Endothelial cell of umbilical vein (primary cell): ENCODE measurements at regions of chr17 and their contacts with region 1.

Region 1: GRCh38 chr17:46044286-46044928 is 45.4 kb downstream of the STH start:
- DNase-seq: peak; percentile 93
- H3K4me3 ChIP-seq: no peak overlapping the region
- H3K27ac ChIP-seq: no peak overlapping the region
- H3K4me1 ChIP-seq: peaks cover 9% of the 10 kb centered on the region
- H3K27me3 ChIP-seq: no peaks in the 10 kb centered on the region
- CTCF ChIP-seq: peak; percentile 79 to 83
- POLR2A ChIP-seq: no peak

Region 2: DNA sequence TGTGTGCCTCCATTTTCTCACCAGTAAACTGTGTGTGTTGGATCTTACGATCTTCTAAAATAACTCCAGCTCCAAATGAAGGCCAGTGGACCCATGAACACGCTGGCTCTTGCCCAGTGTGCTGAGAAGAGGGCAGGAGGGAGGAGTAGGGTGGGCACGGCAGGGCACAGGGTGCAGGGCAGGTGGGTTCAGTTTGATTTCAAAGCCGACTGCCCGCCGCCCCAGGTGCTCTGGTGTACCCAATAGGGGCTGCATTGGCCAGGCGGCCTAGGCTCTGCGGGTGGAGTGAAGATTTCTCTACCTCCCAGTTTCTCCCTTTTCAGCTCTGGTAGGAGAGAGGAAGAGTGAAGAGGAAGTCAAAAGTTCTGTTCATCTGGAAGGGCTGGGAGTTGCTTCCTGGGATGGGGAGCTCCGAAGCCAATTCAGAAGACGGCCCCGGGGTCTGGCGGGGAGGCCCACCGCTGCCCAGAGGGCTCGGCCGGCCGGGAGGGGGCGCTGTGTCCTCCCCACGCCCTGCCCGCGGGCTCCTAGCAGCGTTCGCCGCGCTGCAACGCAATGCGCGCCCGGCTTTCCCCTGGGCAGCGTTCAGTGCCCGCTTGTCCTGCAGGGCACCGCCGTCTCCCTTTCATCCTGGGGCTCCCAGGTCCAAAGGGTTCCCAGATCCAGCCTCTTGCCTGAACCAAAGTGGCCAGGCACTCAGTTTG is 261.4 kb before region 1 on chr17:
- CTCF ChIA-PET with region 1: no interaction called
- POLR2A ChIA-PET with region 1: no interaction called
- dilution Hi-C with region 1: no loop called
- intact Hi-C with region 1: no loop called
- DNase-seq: peak; percentile 11
- H3K4me3 ChIP-seq: no peak overlapping the region
- H3K27ac ChIP-seq: no peak overlapping the region
- H3K4me1 ChIP-seq: peaks cover 8% of the 10 kb centered on the region
- H3K27me3 ChIP-seq: peaks cover 57 to 63% of the 10 kb centered on the region in 2 experiments
- CTCF ChIP-seq: peak; percentile 48 to 76
- POLR2A ChIP-seq: no peak

Region 3: DNA sequence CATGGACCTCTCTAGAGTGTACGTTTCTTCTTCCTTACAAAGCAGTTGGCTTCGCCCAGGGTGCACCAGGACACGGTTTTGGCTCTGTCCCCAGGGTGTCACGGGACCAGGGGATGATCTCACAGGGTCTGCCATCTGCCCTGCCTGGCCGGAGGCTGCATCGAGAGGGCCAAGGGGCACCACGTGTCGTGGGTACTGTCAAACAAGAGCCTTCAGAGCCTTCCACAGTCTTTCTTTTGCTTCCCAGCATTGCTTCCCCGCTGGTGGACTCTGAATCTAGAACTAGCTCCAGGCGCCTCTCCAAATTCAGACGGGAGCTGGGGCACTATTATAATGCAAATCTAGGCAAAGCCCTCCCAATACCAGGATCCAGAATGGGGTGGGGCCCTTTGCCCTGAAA is 102.1 kb before region 1 on chr17:
- CTCF ChIA-PET with region 1: no interaction called
- POLR2A ChIA-PET with region 1: no interaction called
- dilution Hi-C with region 1: no loop called
- intact Hi-C with region 1: no loop called
- DNase-seq: no peak
- H3K4me3 ChIP-seq: no peak overlapping the region
- H3K27ac ChIP-seq: no peak overlapping the region
- H3K4me1 ChIP-seq: no peaks in the 10 kb centered on the region
- H3K27me3 ChIP-seq: peaks cover 8 to 13% of the 10 kb centered on the region in 2 experiments
- CTCF ChIP-seq: no peak
- POLR2A ChIP-seq: no peak

Region 4: DNA sequence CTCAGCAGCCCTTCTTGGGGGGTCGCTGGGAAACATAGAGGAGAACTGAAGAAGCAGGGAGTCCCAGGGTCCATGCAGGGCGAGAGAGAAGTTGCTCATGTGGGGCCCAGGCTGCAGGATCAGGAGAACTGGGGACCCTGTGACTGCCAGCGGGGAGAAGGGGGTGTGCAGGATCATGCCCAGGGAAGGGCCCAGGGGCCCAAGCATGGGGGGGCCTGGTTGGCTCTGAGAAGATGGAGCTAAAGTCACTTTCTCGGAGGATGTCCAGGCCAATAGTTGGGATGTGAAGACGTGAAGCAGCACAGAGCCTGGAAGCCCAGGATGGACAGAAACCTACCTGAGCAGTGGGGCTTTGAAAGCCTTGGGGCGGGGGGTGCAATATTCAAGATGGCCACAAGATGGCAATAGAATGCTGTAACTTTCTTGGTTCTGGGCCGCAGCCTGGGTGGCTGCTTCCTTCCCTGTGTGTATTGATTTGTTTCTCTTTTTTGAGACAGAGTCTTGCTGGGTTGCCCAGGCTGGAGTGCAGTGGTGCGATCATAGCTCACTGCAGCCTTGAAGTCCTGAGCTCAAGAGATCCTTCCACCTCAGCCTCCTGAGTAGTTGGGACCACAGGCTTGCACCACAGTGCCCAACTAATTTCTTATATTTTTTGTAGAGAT is 42.0 kb before region 1 on chr17:
- CTCF ChIA-PET with region 1: interaction called, 11 read pairs
- POLR2A ChIA-PET with region 1: no interaction called
- dilution Hi-C with region 1: no loop called
- intact Hi-C with region 1: loop called (anchors 1 kb)
- DNase-seq: peak; percentile 60
- H3K4me3 ChIP-seq: no peak overlapping the region
- H3K27ac ChIP-seq: no peak overlapping the region
- H3K4me1 ChIP-seq: no peaks in the 10 kb centered on the region
- H3K27me3 ChIP-seq: no peaks in the 10 kb centered on the region
- CTCF ChIP-seq: peak; percentile 79 to 81
- POLR2A ChIP-seq: no peak

Region 5: DNA sequence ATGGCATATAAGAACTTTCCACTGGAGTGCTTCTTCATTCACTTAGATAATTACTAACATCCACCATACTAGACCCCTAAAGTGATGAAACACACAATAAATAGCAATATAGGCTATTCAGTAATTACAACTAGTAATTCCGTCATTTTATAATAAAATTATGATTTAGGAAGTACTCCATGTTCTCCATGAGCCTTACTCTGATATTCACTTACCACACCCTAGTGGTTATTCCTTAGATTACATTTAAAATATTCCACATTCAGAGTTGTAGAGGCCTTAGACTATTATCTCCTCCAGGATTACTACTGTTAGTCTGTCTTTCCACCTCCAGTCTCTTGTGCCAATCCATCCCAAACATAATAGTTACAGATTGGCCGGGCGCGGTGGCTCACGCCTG is 17.0 kb after region 1 on chr17:
- CTCF ChIA-PET with region 1: interaction called, 98 read pairs
- POLR2A ChIA-PET with region 1: no interaction called
- dilution Hi-C with region 1: no loop called
- intact Hi-C with region 1: loop called (anchors 2 kb)
- DNase-seq: peak; percentile 49
- H3K4me3 ChIP-seq: no peak overlapping the region
- H3K27ac ChIP-seq: no peak overlapping the region
- H3K4me1 ChIP-seq: peaks cover 19% of the 10 kb centered on the region
- H3K27me3 ChIP-seq: no peaks in the 10 kb centered on the region
- CTCF ChIP-seq: no peak
- POLR2A ChIP-seq: no peak

Region 6: DNA sequence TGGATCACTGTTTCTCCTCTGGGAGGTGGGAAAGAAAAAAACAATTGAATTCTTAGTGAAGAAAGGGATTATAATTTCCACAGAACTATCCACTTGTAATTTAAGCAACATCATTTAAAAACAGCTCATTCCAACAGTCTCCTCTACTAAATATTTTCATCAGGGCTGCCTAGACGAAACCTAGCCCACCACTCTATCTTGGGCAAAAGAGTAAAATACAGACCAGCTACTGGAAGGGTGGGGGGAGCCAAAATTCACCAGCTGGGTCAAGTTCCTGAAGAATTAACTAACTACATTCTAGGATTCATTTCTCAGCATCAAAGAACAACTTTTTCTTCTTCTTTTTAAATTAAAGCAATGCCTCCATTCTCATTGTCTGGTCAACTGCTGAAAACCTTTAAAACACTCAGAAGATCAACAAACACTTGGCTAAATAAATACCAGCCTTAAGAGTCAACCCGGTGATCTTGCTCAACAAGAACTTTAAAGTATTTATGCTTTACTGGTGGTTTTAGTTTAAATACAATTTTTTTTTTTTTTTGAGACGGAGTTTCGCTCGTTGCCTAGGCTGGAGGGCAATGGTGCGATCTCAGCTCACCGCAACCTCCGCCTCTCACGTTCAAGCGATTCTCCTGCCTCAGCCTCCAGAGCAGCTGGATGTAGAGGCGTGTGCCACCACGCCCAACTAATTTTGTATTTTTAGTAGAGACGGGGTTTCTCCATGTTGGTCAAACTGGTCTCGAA is 123.6 kb after region 1 on chr17:
- CTCF ChIA-PET with region 1: interaction called, 11 read pairs
- POLR2A ChIA-PET with region 1: no interaction called
- dilution Hi-C with region 1: no loop called
- intact Hi-C with region 1: no loop called
- DNase-seq: no peak
- H3K4me3 ChIP-seq: no peak overlapping the region
- H3K27ac ChIP-seq: no peak overlapping the region
- H3K4me1 ChIP-seq: peaks cover 17% of the 10 kb centered on the region
- H3K27me3 ChIP-seq: no peaks in the 10 kb centered on the region
- CTCF ChIP-seq: no peak
- POLR2A ChIP-seq: no peak

Region 7: DNA sequence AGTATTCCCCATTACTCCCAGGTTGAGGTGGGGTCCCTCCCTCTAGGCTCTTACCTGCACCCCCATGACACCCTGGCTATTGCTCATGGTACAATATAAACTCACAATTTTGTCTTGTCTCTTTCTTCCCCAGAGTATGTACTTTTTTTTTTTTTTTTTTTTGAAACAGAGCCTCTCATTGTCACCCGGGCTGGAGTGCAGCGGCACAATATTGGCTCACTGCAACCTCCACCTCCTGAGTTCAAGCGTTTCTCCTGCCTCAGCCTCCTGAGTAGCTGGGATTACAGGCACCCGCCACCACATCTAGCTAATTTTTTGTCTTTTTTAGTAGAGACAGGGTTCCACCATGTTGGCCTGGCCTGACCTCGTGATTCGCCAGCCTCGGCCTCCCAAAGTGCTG is 140.3 kb after region 1 on chr17:
- CTCF ChIA-PET with region 1: interaction called, 52 read pairs
- POLR2A ChIA-PET with region 1: interaction called, 3 read pairs
- dilution Hi-C with region 1: no loop called
- intact Hi-C with region 1: loop called (anchors 1 kb)
- DNase-seq: no peak
- H3K4me3 ChIP-seq: no peak overlapping the region
- H3K27ac ChIP-seq: no peak overlapping the region
- H3K4me1 ChIP-seq: peaks cover 6% of the 10 kb centered on the region
- H3K27me3 ChIP-seq: no peaks in the 10 kb centered on the region
- CTCF ChIP-seq: no peak
- POLR2A ChIP-seq: no peak